BJ (cell line): ENCODE measurements at regions of chr3 and their contacts with region 1.

Region 1: GRCh38 chr3:51099794-51100535 is 285.1 kb upstream of the MANF start:
- DNase-seq: peak; percentile 6
- H3K4me3 ChIP-seq: no peak overlapping the region
- H3K27me3 ChIP-seq: no peaks in the 10 kb centered on the region
- CTCF ChIP-seq: peak; percentile 89

Region 2: GRCh38 chr3:51083490-51083889 is 16.5 kb before region 1 on chr3:
- CTCF ChIA-PET with region 1: interaction called, 11 read pairs
- POLR2A ChIA-PET with region 1: no interaction called
- DNase-seq: no peak
- H3K4me3 ChIP-seq: no peak overlapping the region
- H3K27me3 ChIP-seq: no peaks in the 10 kb centered on the region
- CTCF ChIP-seq: no peak

Region 3: GRCh38 chr3:51371943-51372557 is 272.1 kb after region 1 on chr3:
- CTCF ChIA-PET with region 1: interaction called, 106 read pairs
- POLR2A ChIA-PET with region 1: no interaction called
- DNase-seq: peak; percentile 5
- H3K4me3 ChIP-seq: no peak overlapping the region
- H3K27me3 ChIP-seq: no peaks in the 10 kb centered on the region; the same call in 1 of the 2 replicates
- CTCF ChIP-seq: peak; percentile 79

Region 4: GRCh38 chr3:51379301-51379700 is 279.3 kb after region 1 on chr3:
- CTCF ChIA-PET with region 1: interaction called, 16 read pairs
- POLR2A ChIA-PET with region 1: no interaction called
- DNase-seq: no peak
- H3K4me3 ChIP-seq: no peak overlapping the region
- H3K27me3 ChIP-seq: no peaks in the 10 kb centered on the region
- CTCF ChIP-seq: no peak